ENCODE measurements at regions of chr14 and their contacts with region 1.

Region 1: DNA sequence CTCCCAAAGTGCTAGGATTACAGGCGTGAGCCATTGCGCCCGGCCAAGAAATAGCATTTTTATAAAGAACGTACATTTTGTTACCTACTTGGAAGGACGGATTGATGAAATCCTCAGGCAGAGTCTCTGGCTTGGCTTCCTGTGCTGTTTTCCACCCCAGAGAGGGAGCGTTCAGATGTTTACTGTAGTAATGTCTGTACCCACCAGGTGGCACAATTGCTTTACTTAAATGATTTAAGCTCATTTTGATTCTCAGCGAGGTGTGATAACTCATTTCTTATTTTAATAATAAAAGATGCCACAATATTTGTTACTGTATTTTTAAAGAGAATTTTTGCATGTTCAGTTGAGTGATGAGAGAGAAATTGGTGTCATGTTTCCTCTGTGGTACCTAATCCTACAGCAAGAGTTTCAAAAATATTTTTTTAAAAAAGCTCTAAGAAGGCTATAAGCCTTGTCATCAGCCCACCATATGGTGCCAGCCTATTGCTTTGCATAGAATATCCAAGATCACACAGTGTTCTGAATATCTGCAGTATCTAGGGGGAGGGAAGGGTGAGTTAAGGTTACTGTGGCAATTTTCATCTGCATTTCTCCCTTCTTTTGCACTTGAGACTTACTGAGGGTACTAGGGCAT is 82.6 kb upstream of the TRAF3 start:
- DNase-seq: peak; percentile 77
- H3K4me3 ChIP-seq: no peak overlapping the region
- H3K27ac ChIP-seq: no peak overlapping the region
- H3K4me1 ChIP-seq: peaks cover 13% of the 10 kb centered on the region
- H3K27me3 ChIP-seq: no peaks in the 10 kb centered on the region
- CTCF ChIP-seq: peak; percentile 50 to 60
- POLR2A ChIP-seq: no peak

Region 2: GRCh38 chr14:102524466-102525218 is 170.0 kb before region 1 on chr14:
- CTCF ChIA-PET with region 1: interaction called, 24 read pairs
- POLR2A ChIA-PET with region 1: interaction called, 4 read pairs
- dilution Hi-C with region 1: no loop called
- intact Hi-C with region 1: loop called (anchors 1 kb)
- DNase-seq: peak; percentile 98
- H3K4me3 ChIP-seq: peak overlapping the region; percentile 16 to 57 (median 45)
- H3K27ac ChIP-seq: no peak overlapping the region
- H3K4me1 ChIP-seq: peaks cover 28% of the 10 kb centered on the region
- H3K27me3 ChIP-seq: no peaks in the 10 kb centered on the region
- CTCF ChIP-seq: peak; percentile 98 to 100
- POLR2A ChIP-seq: peak; percentile 90

Region 3: GRCh38 chr14:102655170-102655569 is 39.5 kb before region 1 on chr14:
- CTCF ChIA-PET with region 1: interaction called, 11 read pairs
- POLR2A ChIA-PET with region 1: no interaction called
- dilution Hi-C with region 1: no loop called
- intact Hi-C with region 1: no loop called
- DNase-seq: peak; percentile 92
- H3K4me3 ChIP-seq: peak overlapping the region in 1 of 3 experiments; percentile 51
- H3K27ac ChIP-seq: peak overlapping the region; percentile 97
- H3K4me1 ChIP-seq: peaks cover 20% of the 10 kb centered on the region
- H3K27me3 ChIP-seq: no peaks in the 10 kb centered on the region
- CTCF ChIP-seq: no peak
- POLR2A ChIP-seq: no peak

Region 4: DNA sequence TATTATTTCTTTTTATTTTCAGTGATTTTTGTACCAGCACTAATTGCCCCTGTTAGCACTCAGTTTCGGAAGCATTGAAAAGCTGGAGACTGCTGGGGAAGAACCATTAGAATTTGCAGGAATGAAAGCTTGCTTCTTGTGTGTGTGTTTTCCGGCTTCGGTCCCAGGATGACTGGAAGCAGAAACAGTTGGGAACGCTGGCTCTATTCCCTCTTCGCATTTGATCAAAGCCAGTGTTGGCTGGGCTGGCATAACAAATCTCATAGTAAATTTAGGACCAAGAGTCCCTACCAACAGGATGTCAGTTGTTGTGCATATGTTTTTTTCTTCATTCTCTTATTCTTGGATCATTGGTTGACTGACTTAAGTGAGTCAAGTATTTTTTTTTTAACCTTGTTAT is 29.0 kb after region 1 on chr14:
- CTCF ChIA-PET with region 1: interaction called, 10 read pairs
- POLR2A ChIA-PET with region 1: no interaction called
- dilution Hi-C with region 1: no loop called
- intact Hi-C with region 1: no loop called
- DNase-seq: no peak
- H3K4me3 ChIP-seq: no peak overlapping the region
- H3K27ac ChIP-seq: no peak overlapping the region
- H3K4me1 ChIP-seq: no peaks in the 10 kb centered on the region
- H3K27me3 ChIP-seq: no peaks in the 10 kb centered on the region
- CTCF ChIP-seq: no peak
- POLR2A ChIP-seq: no peak

Region 5: GRCh38 chr14:102897299-102898027 is 202.8 kb after region 1 on chr14:
- CTCF ChIA-PET with region 1: interaction called, 10 read pairs
- POLR2A ChIA-PET with region 1: no interaction called
- dilution Hi-C with region 1: no loop called
- intact Hi-C with region 1: no loop called
- DNase-seq: no peak
- H3K4me3 ChIP-seq: no peak overlapping the region
- H3K27ac ChIP-seq: no peak overlapping the region
- H3K4me1 ChIP-seq: no peaks in the 10 kb centered on the region
- H3K27me3 ChIP-seq: no peaks in the 10 kb centered on the region
- CTCF ChIP-seq: no peak
- POLR2A ChIP-seq: no peak

Region 6: DNA sequence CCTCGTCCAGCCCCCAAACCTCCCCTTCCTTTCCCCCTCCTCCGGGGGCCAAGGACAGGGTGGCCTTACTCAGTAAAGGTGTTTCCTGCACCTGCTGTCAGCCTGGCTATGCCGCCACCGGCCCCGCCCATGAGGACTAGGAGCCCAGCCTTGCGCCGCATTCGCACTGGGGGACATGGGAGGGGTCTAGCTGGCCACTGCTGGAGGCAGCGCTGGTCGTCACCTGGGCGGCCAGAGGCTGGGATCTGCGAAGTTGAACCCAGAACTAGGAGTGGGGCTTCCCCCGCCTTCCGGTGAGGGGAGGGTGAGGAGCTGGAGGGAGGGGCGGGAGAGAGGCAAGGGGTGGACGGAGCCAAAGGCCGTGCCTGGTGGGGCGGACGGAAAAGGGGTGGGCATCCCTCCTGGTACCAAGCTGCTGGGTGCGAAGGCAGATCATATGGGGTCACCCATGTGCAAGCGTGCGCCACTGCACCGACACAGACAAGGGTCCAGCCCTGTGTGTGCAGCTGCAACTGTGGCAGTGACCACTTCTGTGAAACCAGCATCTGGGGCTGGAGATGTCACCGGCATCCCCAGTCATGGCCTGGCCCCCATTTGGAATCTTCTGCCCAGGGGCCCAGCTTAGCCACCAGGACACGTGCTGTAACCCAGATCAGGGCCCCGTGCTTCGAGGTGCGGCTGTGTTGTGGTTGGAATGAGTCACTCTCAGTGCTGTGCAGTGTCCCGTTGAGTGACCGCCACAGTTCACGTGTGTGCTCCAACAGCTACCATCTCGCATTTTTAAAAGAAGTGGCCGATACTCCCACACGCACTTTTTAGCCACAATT is 236.3 kb after region 1 on chr14:
- CTCF ChIA-PET with region 1: interaction called, 29 read pairs
- POLR2A ChIA-PET with region 1: no interaction called
- dilution Hi-C with region 1: no loop called
- intact Hi-C with region 1: no loop called
- DNase-seq: no peak
- H3K4me3 ChIP-seq: no peak overlapping the region
- H3K27ac ChIP-seq: no peak overlapping the region
- H3K4me1 ChIP-seq: peaks cover 13% of the 10 kb centered on the region
- H3K27me3 ChIP-seq: peaks cover 23 to 38% of the 10 kb centered on the region in 2 experiments
- CTCF ChIP-seq: no peak
- POLR2A ChIP-seq: no peak

Measured in endothelial cell of umbilical vein (primary cell).